ENCODE measurements at regions of chr14 and their contacts with region 1.

Region 1: GRCh38 chr14:63273717-63274655 is 44.7 kb downstream of the GPHB5 start:
- DNase-seq: no peak

Region 2: GRCh38 chr14:62179367-62180018 is 1094.5 kb before region 1 on chr14:
- in situ Hi-C with region 1: loop called (anchors 25 kb)
- DNase-seq: peak; percentile 47